ENCODE measurements at regions of chr1 and their contacts with region 1.

Region 1: GRCh38 chr1:211323156-211324063 is 3.2 kb upstream of the TRAF5 start:
- DNase-seq: no peak
- ATAC-seq: no peak

Region 2: DNA sequence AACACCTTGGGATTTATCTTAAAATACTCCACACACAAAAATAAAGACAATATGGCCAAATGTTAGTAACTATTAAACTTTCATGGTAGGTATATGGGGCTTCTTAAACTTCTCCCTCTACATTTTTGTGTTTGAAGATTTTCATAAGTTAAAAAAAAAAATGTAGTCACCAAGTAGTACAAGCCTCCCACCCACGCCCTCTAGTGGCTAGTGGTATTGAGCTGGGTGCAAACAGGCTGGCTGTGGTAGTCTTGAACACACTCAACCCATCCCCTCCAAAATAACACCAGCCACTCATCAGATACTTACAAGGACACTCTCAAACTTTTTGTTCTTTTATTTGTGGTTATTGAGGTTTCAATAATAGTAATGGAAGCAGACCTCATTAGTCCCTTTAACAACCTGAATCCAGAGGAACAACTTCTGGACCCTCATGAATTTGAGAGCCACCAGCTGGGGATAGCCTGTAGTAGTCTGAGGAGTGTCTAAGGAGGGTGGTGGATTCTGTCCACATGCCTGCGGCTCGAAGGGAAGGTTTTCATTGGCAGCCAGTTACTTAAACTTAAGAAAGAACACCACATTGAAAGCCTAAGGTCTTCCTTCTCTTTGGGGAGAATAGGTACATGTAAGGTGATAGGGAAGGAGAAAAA is 152.9 kb after region 1 on chr1:
- intact Hi-C with region 1: loop called (anchors 10 kb)
- DNase-seq: peak; percentile 66
- ATAC-seq: peak; percentile 80